Left ventricle myocardium inferior (tissue), 1 donor: ENCODE measurements at regions of chr3 and their contacts with region 1.

Region 1: GRCh38 chr3:112519424-112520001 is 20.2 kb upstream of the BTLA start:
- DNase-seq: no peak
- H3K4me3 ChIP-seq: no peak overlapping the region
- H3K27ac ChIP-seq: no peak overlapping the region
- H3K4me1 ChIP-seq: no peaks in the 10 kb centered on the region
- H3K27me3 ChIP-seq: no peaks in the 10 kb centered on the region
- CTCF ChIP-seq: peak; percentile 81

Region 2: DNA sequence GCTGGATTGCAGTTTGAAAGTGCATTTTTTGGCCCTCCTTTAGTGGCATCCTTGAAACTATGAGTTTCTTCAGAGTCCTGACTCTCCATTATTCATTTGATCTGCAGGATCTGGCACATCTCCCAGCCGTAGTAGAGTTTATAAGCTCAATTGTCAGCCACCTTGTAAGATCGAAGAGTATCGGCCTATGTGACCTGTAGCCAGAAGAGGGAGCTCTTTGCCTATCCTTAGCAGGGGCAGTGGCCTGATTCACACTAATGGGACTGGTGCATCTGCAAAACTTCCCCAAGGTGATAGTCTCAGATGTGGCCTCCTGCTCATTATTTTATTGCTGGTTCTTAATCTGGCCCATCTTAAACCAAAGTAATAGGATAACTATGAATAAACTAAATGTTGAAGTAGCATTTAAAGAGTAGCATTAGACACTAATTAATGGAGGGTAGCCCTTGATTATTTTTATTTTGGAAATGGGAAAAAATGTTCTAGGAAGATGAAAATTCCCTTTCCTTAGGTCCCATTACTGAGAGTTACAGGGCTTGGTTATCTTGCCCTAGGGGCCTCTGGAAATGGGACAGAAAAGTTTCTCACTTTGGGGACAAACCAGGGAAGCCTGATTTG is 407.6 kb before region 1 on chr3:
- intact Hi-C with region 1: loop called (anchors 5 kb)
- DNase-seq: no peak
- H3K4me3 ChIP-seq: no peak overlapping the region
- H3K27ac ChIP-seq: no peak overlapping the region
- H3K4me1 ChIP-seq: peaks cover 12% of the 10 kb centered on the region
- H3K27me3 ChIP-seq: no peaks in the 10 kb centered on the region
- CTCF ChIP-seq: peak; percentile 83

Region 3: GRCh38 chr3:112293368-112294321 is 225.9 kb before region 1 on chr3 and contains the start of gene SLC9C1:
- intact Hi-C with region 1: loop called (anchors 10 kb)
- DNase-seq: no peak
- H3K4me3 ChIP-seq: peak within 1 kb of the TSS; percentile 68
- H3K27ac ChIP-seq: peak within 1 kb of the TSS; percentile 77
- H3K4me1 ChIP-seq: peaks cover 11% of the 10 kb centered on the region
- H3K27me3 ChIP-seq: no peaks in the 10 kb centered on the region
- CTCF ChIP-seq: peak; percentile 72
- total RNA-seq, gene SLC9C1: 1.3 TPM

Region 4: DNA sequence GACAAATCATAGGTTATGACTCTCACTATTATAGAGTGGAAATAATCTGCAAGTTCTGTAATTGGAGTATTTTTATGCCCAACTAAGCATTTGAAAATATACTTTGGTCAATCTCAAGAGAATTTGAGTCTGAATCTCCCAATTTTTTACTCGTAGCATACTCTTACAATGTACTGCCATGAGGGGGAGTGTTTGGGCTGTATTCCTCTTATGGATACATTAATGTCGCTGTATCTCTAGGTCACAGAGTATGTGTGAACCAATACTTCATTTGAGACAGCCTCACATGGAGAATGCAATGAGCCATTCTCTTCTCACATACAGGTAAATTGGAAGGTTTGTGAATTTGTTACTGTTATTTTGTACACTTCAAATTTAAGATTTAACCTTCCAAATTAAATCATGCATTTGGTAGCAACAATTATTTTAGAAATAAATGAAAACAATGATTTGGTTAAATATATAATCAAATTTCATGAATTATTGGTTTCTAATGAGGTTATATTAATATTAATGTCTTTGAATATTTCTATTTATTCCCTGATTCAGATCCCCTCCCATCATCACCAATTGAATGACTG is 192.1 kb before region 1 on chr3:
- intact Hi-C with region 1: loop called (anchors 2 kb)
- DNase-seq: no peak
- H3K4me3 ChIP-seq: no peak overlapping the region
- H3K27ac ChIP-seq: no peak overlapping the region
- H3K4me1 ChIP-seq: no peaks in the 10 kb centered on the region
- H3K27me3 ChIP-seq: peaks cover 11% of the 10 kb centered on the region
- CTCF ChIP-seq: peak; percentile 66

Region 5: GRCh38 chr3:112357930-112358780 is 161.4 kb before region 1 on chr3:
- intact Hi-C with region 1: no loop called
- DNase-seq: no peak
- H3K4me3 ChIP-seq: peak overlapping the region; percentile 59
- H3K27ac ChIP-seq: peak overlapping the region; percentile 82
- H3K4me1 ChIP-seq: peaks cover 24% of the 10 kb centered on the region
- H3K27me3 ChIP-seq: no peaks in the 10 kb centered on the region
- CTCF ChIP-seq: no peak